ENCODE measurements at regions of chr1 and their contacts with region 1.

Region 1: GRCh38 chr1:67489643-67490042 is 59.4 kb upstream of the SERBP1 start:
- DNase-seq: no peak
- H3K4me3 ChIP-seq: no peak overlapping the region
- H3K27ac ChIP-seq: no peak overlapping the region
- H3K4me1 ChIP-seq: peaks cover 0 to 9% (median 0%) of the 10 kb centered on the region in 3 donors
- H3K27me3 ChIP-seq: no peaks in the 10 kb centered on the region
- CTCF ChIP-seq: peak in 3 of 6 experiments; percentile 19 to 47 (median 24)
- POLR2A ChIP-seq: no peak

Region 2: GRCh38 chr1:67230539-67230938 is 259.1 kb before region 1 on chr1:
- intact Hi-C with region 1: loop called (anchors 10 kb)
- DNase-seq: no peak
- H3K4me3 ChIP-seq: no peak overlapping the region
- H3K27ac ChIP-seq: peak overlapping the region in 3 of 4 donors; percentile 74 to 83 (median 78)
- H3K4me1 ChIP-seq: peaks cover 8 to 75% (median 26%) of the 10 kb centered on the region in 3 donors
- H3K27me3 ChIP-seq: no peaks in the 10 kb centered on the region
- CTCF ChIP-seq: no peak
- POLR2A ChIP-seq: no peak

Region 3: DNA sequence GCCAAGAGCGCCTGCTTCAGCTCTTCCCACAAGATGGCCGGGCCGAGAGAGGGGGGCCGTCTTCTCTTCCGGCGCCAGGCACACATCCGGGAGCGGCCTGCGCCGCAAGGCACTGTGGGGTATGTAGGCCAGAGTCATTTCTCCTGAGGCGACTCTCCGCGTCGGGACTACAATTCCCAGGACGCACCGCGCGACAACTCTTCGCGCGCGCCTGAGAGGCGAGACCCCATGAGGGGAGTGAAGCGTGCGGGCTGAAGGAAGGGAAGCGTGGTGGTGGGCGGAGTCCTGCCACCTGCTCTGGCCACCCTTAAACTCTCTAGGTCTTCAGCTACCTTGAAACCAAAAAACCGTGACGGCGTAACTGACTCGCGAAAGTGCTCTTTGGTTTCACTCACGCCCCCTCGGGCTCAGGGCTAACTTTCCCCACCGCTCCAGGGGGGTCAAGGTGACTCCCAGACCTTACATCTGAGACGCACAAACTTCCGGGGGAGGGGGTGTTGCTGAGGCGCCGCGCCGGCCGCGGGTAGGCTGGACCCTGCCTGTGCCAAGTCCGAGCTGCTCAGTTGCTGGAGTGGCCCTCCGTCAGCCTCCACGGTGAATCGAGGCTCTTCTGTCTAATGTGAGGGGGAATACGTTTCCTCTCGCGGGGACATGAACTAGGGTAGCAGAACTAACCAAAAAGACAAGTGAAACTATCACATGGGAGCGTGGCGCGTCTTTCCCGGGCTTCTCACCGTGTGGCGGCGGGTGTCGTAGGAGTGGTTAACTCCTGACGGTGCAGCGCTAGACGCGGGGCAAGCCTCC is 59.1 kb before region 1 on chr1 and contains the start of gene SERBP1:
- intact Hi-C with region 1: loop called (anchors 10 kb)
- DNase-seq: peak; percentile 67
- H3K4me3 ChIP-seq: peak within 1 kb of the TSS; percentile 73 to 94 (median 84)
- H3K27ac ChIP-seq: peak within 1 kb of the TSS; percentile 94 to 99 (median 96)
- H3K4me1 ChIP-seq: peaks cover 6 to 63% (median 35%) of the 10 kb centered on the region in 3 donors
- H3K27me3 ChIP-seq: no peaks in the 10 kb centered on the region
- CTCF ChIP-seq: peak in 4 of 6 experiments; percentile 2 to 11 (median 6)
- POLR2A ChIP-seq: peak in 3 of 4 donors; percentile 14 to 85 (median 79)
- total RNA-seq, gene SERBP1: 282 to 394 (median 357) TPM